ENCODE measurements at regions of chr14 and their contacts with region 1.

Region 1: GRCh38 chr14:32509632-32510187 is 180.6 kb downstream of the AKAP6 start:
- DNase-seq: peak; percentile 98
- H3K4me3 ChIP-seq: no peak overlapping the region
- H3K27ac ChIP-seq: peak overlapping the region; percentile 67
- H3K4me1 ChIP-seq: peaks cover 25% of the 10 kb centered on the region
- H3K27me3 ChIP-seq: no peaks in the 10 kb centered on the region
- CTCF ChIP-seq: no peak
- POLR2A ChIP-seq: peak; percentile 41

Region 2: DNA sequence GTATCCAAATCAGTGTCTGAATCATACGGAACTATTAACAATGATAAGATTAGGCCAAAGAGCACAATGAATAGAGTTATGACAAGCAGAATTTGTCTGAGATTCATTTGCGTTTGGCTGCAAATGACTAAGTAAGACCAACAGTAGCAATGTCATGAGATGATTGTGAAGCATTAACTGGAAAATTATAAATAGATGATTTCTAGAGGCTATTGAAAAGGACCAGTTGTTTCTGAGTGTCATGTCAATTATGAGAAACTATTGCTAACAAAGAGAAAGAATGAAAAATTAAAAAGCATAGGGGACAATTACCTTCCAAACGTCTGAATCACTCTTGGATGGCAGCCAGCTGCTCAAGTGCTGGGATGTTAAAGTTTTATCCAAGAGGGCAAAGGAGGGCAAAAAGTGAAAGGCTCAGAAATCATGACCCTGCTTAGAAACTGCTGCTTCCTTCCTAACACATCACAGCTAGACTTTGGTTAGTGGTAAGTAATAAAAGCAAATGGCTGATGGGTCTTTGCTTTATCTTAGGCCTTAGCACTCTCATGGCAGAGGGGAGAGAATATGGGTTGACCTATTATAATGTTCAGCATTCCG is 91.7 kb before region 1 on chr14:
- CTCF ChIA-PET with region 1: interaction called, 4 read pairs
- POLR2A ChIA-PET with region 1: no interaction called
- dilution Hi-C with region 1: no loop called
- intact Hi-C with region 1: loop called (anchors 5 kb)
- DNase-seq: peak; percentile 89
- H3K4me3 ChIP-seq: no peak overlapping the region
- H3K27ac ChIP-seq: peak overlapping the region; percentile 54
- H3K4me1 ChIP-seq: peaks cover 36% of the 10 kb centered on the region
- H3K27me3 ChIP-seq: no peaks in the 10 kb centered on the region
- CTCF ChIP-seq: no peak
- POLR2A ChIP-seq: no peak

Region 3: DNA sequence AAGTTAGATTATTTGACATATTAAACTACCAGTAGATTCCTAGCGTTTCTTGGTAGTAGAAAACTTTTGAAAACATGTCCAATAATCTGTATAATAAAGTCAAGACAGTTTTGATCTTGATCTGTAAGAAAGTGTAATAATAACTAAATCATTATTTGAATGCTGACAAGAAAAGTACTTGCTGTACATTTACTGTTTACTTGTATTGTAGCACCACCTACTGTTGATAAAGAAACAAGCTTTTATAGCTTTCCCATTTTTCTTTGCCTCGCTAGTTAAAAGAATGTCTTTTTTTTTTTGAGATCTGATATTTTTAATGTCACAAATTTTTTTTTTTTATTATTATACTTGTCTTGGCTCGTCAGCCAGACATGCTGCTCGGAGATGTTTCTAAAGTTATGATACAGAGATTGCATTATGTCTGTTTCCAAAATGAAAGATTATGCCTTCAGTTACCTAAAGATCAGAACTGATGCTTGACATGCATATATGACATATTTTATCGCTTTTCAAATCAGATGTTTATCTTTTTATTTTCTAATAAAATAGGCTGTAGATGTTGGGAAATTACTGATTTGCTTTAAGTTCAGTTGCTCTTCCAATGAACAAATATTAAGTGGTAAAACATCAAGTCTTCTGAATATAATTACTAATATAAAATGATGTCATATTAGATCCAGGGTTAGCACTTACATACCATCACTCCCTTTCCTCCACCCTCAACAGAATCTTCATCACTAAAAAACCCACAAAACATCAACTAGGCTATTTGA is 40.1 kb before region 1 on chr14:
- CTCF ChIA-PET with region 1: interaction called, 66 read pairs
- POLR2A ChIA-PET with region 1: no interaction called
- dilution Hi-C with region 1: no loop called
- intact Hi-C with region 1: loop called (anchors 2 kb)
- DNase-seq: peak; percentile 62
- H3K4me3 ChIP-seq: no peak overlapping the region
- H3K27ac ChIP-seq: no peak overlapping the region
- H3K4me1 ChIP-seq: peaks cover 3% of the 10 kb centered on the region
- H3K27me3 ChIP-seq: no peaks in the 10 kb centered on the region
- CTCF ChIP-seq: peak; percentile 17 to 36
- POLR2A ChIP-seq: no peak

Region 4: DNA sequence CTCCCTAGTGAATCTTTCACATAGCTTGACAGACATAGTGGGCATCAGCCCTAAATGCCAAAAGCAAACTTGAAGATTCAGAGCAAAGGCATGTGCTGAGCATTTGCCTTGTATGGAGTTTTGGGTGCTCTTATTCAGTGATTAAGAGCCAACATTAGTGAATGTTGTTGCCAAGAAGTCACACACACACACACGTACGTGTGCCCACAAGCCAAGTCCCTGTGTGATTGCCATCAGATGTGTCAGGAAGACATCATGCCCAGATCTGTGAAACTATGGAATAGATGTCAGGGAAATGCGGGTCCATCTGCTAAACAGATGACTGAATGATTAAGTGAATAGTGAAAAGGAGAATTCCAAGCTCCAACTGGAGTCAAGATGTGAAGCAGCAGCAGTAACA is 31.7 kb before region 1 on chr14:
- CTCF ChIA-PET with region 1: interaction called, 66 read pairs
- POLR2A ChIA-PET with region 1: interaction called, 4 read pairs
- dilution Hi-C with region 1: no loop called
- intact Hi-C with region 1: no loop called
- DNase-seq: no peak
- H3K4me3 ChIP-seq: no peak overlapping the region
- H3K27ac ChIP-seq: no peak overlapping the region
- H3K4me1 ChIP-seq: no peaks in the 10 kb centered on the region
- H3K27me3 ChIP-seq: no peaks in the 10 kb centered on the region
- CTCF ChIP-seq: no peak
- POLR2A ChIP-seq: no peak

Region 5: DNA sequence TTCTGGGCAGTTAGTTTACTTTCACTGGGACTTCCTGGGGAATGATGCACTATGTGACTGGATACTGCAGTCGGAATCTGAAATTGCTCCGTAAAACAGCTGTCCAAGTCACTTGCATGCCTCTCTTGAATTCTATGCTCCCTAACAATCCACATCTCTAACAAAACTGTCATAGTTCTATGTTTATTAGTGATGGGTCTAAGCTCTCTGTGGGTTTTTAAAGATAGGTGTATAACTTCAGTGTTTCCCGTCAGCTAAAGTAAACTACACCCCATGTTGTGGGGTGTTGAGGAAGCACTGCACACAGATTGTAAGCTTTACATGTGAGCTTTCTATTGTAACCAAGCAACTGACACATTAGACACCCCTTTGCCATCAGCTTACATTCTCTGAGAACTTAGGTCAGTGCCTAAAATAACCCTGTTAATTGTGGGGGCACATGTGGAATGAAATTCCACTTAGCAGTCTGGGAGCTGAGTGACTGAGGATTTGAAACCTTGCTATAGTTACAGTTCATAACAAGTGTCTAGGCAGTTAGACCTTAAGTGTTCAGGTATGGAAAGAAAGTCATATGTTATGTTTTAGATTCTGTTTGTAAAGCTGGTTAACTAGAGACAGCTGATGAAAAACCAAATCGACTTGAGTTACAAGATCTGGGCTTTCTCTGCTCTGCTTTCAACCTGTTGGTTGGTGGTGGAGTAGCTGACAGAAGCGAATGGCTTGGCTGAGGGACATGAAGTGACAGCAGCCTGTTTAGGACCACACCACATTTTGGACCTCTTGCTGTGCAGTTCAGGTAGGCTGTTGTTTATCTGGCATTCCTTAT is 14.9 kb before region 1 on chr14:
- CTCF ChIA-PET with region 1: interaction called, 11 read pairs
- POLR2A ChIA-PET with region 1: no interaction called
- dilution Hi-C with region 1: no loop called
- intact Hi-C with region 1: no loop called
- DNase-seq: no peak
- H3K4me3 ChIP-seq: no peak overlapping the region
- H3K27ac ChIP-seq: no peak overlapping the region
- H3K4me1 ChIP-seq: no peaks in the 10 kb centered on the region
- H3K27me3 ChIP-seq: no peaks in the 10 kb centered on the region
- CTCF ChIP-seq: no peak
- POLR2A ChIP-seq: no peak

Region 6: GRCh38 chr14:32524609-32525375 is 15.1 kb after region 1 on chr14:
- CTCF ChIA-PET with region 1: interaction called, 64 read pairs
- POLR2A ChIA-PET with region 1: interaction called, 3 read pairs
- dilution Hi-C with region 1: no loop called
- intact Hi-C with region 1: loop called (anchors 1 kb)
- DNase-seq: peak; percentile 83
- H3K4me3 ChIP-seq: peak overlapping the region in 1 of 3 experiments; percentile 18
- H3K27ac ChIP-seq: peak overlapping the region; percentile 94
- H3K4me1 ChIP-seq: peaks cover 17% of the 10 kb centered on the region
- H3K27me3 ChIP-seq: no peaks in the 10 kb centered on the region
- CTCF ChIP-seq: no peak
- POLR2A ChIP-seq: no peak

Region 7: GRCh38 chr14:32702562-32702961 is 192.9 kb after region 1 on chr14:
- CTCF ChIA-PET with region 1: no interaction called
- POLR2A ChIA-PET with region 1: no interaction called
- dilution Hi-C with region 1: no loop called
- intact Hi-C with region 1: no loop called
- DNase-seq: peak; percentile 24
- H3K4me3 ChIP-seq: no peak overlapping the region
- H3K27ac ChIP-seq: peak overlapping the region; percentile 2
- H3K4me1 ChIP-seq: peaks cover 7% of the 10 kb centered on the region
- H3K27me3 ChIP-seq: peaks cover 2 to 3% of the 10 kb centered on the region in 2 experiments
- CTCF ChIP-seq: no peak
- POLR2A ChIP-seq: no peak